Heart left ventricle (tissue), 16 donors: ENCODE measurements at regions of chr9 and their contacts with region 1.

Region 1: DNA sequence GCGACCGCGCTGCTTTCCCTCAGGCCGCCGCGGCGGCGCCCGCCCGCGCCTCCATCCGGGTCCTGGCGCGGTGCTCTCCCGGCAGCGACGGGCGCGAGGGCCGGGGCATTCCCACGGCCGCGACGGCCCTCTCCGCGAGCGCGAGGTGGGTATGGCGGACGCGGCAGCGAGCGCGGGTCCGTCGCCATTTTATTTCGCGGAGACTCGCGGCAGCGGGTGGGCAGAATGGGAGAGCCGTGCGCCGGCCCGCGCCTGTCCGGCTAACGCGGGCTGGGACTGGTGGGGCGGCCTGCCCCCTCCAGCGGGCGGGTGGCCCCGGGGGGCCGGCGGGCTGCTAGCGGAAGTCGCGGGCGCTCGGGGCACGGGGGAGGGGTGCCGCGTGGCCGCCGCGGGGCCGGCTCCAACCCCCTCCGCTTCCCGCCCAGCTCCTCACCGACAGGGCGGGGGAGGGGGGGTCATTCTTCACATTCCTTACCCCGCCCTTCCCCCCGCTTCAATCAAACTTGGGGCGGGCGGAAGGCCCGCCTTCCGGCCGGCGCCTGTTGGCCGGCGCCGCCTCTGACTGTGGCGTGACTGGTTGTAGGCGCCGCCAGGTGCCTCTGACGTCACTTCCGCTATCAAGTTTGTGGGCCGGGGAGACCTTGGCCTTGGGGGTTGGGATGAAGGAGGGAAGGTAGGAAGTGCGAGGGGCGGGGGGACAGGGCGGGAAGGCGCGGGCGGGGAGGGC is 82.1 kb downstream of the PTPDC1 start:
- DNase-seq: peak; percentile 98 to 99 (median 99)
- ATAC-seq: peak; percentile 83 to 88 (median 84)
- H3K4me3 ChIP-seq: peak overlapping the region; percentile 50 to 91 (median 86)
- H3K27ac ChIP-seq: peak overlapping the region; percentile 97 to 100 (median 100)
- H3K4me1 ChIP-seq: peaks cover 3 to 47% (median 38%) of the 10 kb centered on the region in 12 donors
- H3K27me3 ChIP-seq: no peaks in the 10 kb centered on the region
- CTCF ChIP-seq: peak in 5 of 12 donors; percentile 22 to 51 (median 29)
- POLR2A ChIP-seq: peak; percentile 83 to 97

Region 2: DNA sequence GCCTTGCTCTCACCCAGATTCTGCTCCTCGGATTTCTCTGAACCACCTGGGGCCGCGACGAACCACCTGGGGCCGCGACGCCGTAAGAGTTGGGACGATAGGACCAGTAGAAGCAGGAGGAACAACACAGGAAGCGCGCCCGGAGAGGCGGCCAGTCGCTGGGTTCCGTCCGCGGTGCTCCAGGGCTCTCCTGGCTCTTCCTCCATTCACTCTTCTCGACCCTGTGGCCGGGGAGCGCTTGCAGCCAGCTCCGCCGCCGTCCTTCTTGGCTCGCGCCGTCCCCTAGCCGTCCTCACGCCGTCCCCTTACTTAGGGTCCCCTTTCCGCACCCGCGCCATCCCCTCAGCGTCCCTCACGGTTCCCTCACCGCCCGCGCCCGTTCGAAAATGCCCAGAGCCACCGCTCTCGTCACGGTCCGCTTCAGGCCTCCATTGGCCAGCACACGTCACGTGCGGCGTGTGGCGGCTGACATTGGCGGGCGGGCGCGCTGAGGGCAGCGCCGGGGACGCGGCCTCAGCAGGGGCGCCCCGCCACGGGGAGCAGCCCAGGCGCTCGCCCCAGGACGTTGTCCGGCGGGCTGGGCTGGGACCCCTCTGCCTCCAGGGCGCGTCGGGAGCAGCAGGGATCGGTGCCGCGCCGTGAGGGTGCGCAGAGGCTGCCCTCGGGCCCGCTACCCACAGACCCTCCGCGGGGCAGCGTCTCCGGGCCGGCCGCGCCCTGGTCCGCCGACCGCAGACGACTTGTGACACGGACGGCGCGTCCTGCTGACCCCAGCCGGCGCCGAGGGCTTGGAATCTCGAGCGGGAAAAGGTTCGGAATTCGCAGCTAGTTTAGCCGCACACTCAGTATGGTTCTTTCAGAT is 135.9 kb before region 1 on chr9:
- intact Hi-C with region 1: loop called in 1 of 10 experiments (anchors 5 kb)
- DNase-seq: peak; percentile 89 to 93 (median 91)
- ATAC-seq: peak; percentile 99 to 100 (median 100)
- H3K4me3 ChIP-seq: peak overlapping the region; percentile 75 to 99 (median 90)
- H3K27ac ChIP-seq: peak overlapping the region; percentile 77 to 95 (median 88)
- H3K4me1 ChIP-seq: peaks cover 0 to 22% (median 14%) of the 10 kb centered on the region in 12 donors
- H3K27me3 ChIP-seq: no peaks in the 10 kb centered on the region
- CTCF ChIP-seq: peak in 2 of 12 donors; percentile 6 to 10
- POLR2A ChIP-seq: peak; percentile 75 to 94

Region 3: GRCh38 chr9:94084314-94084713 is 82.1 kb before region 1 on chr9 and contains the start of gene PTPDC1:
- intact Hi-C with region 1: loop called in 2 of 10 experiments (anchors 2 to 5 kb)
- DNase-seq: peak in 1 of 5 donors; percentile 21
- ATAC-seq: peak in 3 of 4 donors; percentile 42 to 54 (median 52)
- H3K4me3 ChIP-seq: peak within 1 kb of the TSS in 5 of 12 donors; percentile 16 to 43 (median 26)
- H3K27ac ChIP-seq: peak within 1 kb of the TSS in 9 of 12 donors; percentile 15 to 76 (median 53)
- H3K4me1 ChIP-seq: peaks cover 0 to 45% (median 31%) of the 10 kb centered on the region in 12 donors
- H3K27me3 ChIP-seq: no peaks in the 10 kb centered on the region
- CTCF ChIP-seq: no peak
- POLR2A ChIP-seq: no peak
- total RNA-seq, gene PTPDC1: 6.4 to 12.3 (median 9.5) TPM